Naive thymus-derived CD4-positive, alpha-beta T cell (primary cell): ENCODE measurements at regions of chr11 and their contacts with region 1.

Region 1: DNA sequence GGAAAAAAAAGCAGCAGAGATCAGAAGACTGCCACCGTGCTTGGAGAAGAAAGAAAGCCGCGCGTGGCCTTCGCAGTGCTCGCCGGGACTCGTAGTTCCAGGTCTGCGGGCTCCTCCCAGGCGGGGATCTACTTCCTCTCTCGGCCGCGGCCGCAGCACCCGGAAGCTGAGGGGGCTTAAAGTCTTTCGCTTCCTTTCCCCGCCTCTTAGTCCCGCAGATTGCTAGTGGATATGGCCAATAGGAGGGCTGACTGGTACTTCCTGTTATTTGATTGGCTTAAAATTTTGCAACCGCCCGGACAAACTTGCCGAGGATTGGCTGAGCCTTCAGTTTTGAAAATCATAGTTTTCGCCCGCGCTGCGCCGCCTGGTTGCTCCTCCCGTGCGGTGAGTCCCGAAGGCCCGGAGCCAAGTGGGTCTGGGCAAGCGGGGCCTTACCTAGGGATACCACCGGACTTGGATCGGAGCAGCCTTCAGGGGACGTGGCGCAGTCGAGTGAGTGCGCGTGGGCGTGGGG is at the start of gene INCENP:
- DNase-seq: peak; percentile 75 to 97 (median 95)
- ATAC-seq: peak; percentile 100
- H3K4me3 ChIP-seq: peak within 1 kb of the TSS; percentile 87
- H3K4me3 Mint-ChIP-seq: peak within 1 kb of the TSS; percentile 89 to 95 (median 94)
- H3K27ac ChIP-seq: peak within 1 kb of the TSS; percentile 81
- H3K27ac Mint-ChIP-seq: peak within 1 kb of the TSS; percentile 53 to 95 (median 91)
- H3K4me1 ChIP-seq: peaks cover 6 to 9% of the 10 kb centered on the region in 2 donors
- H3K4me1 Mint-ChIP-seq: peaks cover 22 to 40% (median 28%) of the 10 kb centered on the region in 7 donors
- H3K27me3 ChIP-seq: no peaks in the 10 kb centered on the region
- H3K27me3 Mint-ChIP-seq: peaks cover 0 to 15% (median 0%) of the 10 kb centered on the region in 5 donors
- total RNA-seq, gene INCENP: 18.6 to 124 (median 25.6) TPM

Region 2: GRCh38 chr11:60906132-60906972 is 1217.4 kb before region 1 on chr11 and contains the start of gene PRPF19:
- CTCF ChIA-PET with region 1: no interaction called
- POLR2A ChIA-PET with region 1: no interaction called
- intact Hi-C with region 1: loop called in 1 of 2 experiments (anchors 5 kb)
- DNase-seq: peak; percentile 98 to 100 (median 99)
- ATAC-seq: peak; percentile 96
- H3K4me3 ChIP-seq: peak within 1 kb of the TSS; percentile 89
- H3K4me3 Mint-ChIP-seq: peak within 1 kb of the TSS; percentile 84 to 95 (median 91)
- H3K27ac ChIP-seq: peak within 1 kb of the TSS; percentile 88
- H3K27ac Mint-ChIP-seq: peak within 1 kb of the TSS; percentile 95 to 100 (median 98)
- H3K4me1 ChIP-seq: peaks cover 22 to 26% of the 10 kb centered on the region in 2 donors
- H3K4me1 Mint-ChIP-seq: peaks cover 34 to 69% (median 58%) of the 10 kb centered on the region in 7 donors
- H3K27me3 ChIP-seq: no peaks in the 10 kb centered on the region
- H3K27me3 Mint-ChIP-seq: peaks cover 0 to 11% (median 0%) of the 10 kb centered on the region in 5 donors
- total RNA-seq, gene PRPF19: 72.8 to 139 (median 85.6) TPM

Region 3: DNA sequence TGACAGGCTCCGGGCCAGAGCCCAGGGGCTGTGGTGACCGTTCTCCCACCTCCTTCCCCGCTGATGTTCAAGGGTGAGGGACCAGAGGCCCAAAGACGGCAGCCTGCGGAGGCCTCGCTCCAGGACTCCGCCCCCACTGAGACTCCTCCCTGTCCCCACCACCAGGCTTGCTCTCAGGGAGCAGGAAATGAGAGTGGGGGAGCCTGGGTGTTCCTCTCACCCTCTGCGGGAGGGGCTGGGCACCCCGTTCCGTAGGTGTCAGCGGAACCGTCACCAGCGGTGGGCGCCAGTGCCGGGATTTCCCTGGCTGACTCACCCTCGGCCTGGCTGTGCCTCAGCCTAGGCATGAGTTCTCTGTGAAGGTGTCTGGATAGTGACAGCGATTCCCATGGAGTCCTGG is 427.8 kb before region 1 on chr11:
- CTCF ChIA-PET with region 1: no interaction called
- POLR2A ChIA-PET with region 1: no interaction called
- intact Hi-C with region 1: loop called in 1 of 2 experiments (anchors 1 kb)
- DNase-seq: peak; percentile 67 to 96 (median 87)
- ATAC-seq: peak; percentile 99
- H3K4me3 ChIP-seq: peak overlapping the region; percentile 55
- H3K4me3 Mint-ChIP-seq: peak overlapping the region; percentile 71 to 80 (median 76)
- H3K27ac ChIP-seq: peak overlapping the region; percentile 71
- H3K27ac Mint-ChIP-seq: peak overlapping the region; percentile 76 to 97 (median 86)
- H3K4me1 ChIP-seq: peaks cover 14 to 31% of the 10 kb centered on the region in 2 donors
- H3K4me1 Mint-ChIP-seq: peaks cover 18 to 29% (median 26%) of the 10 kb centered on the region in 7 donors
- H3K27me3 ChIP-seq: no peaks in the 10 kb centered on the region
- H3K27me3 Mint-ChIP-seq: no peaks in the 10 kb centered on the region

Region 4: DNA sequence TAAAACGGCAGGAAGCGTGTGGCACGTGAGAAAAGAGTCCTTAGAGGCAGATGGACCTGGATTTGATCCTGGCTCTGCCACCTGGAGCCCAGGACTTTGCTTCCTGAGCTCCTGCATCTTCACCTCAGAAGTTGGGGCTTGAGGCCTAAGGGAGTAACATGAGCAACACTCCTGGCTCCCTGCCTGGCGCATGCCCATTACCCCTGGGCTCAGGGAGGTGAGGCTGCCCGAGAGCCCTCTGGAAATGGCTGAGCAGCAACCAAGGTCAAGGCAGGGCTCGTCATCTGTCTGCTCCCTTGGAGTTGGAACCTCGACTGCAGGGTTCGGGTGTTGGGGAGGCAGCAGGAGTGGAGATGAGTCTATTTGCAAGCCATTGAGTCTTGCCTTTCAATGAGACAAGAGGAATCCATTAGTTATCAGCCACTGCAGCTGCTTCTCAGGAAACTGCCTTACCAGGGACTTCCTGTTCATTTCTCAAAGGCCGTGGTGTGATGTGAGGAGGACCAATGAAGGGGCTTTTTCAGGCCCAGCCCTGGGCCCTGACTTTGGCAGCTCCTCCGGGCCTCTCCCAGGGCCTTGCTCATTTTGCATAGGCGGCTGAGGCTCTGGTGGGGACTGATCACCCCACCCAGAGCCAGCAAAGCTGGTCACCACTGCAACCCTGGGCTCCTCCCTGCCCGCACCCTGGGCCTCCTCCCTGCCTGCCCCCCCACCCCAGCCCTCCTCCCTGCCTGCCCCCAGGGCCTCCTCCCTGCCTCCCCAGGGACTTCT is 289.3 kb before region 1 on chr11:
- CTCF ChIA-PET with region 1: no interaction called
- POLR2A ChIA-PET with region 1: no interaction called
- intact Hi-C with region 1: loop called in 1 of 2 experiments (anchors 5 kb)
- DNase-seq: peak in 8 of 9 donors; percentile 17 to 71 (median 37)
- ATAC-seq: peak; percentile 92
- H3K4me3 ChIP-seq: no peak overlapping the region
- H3K4me3 Mint-ChIP-seq: peak overlapping the region in 8 of 10 donors; percentile 4 to 84 (median 48)
- H3K27ac ChIP-seq: peak overlapping the region; percentile 39
- H3K27ac Mint-ChIP-seq: peak overlapping the region in 8 of 9 donors; percentile 32 to 98 (median 78)
- H3K4me1 ChIP-seq: peaks cover 11 to 14% of the 10 kb centered on the region in 2 donors
- H3K4me1 Mint-ChIP-seq: peaks cover 22 to 69% (median 38%) of the 10 kb centered on the region in 7 donors
- H3K27me3 ChIP-seq: no peaks in the 10 kb centered on the region
- H3K27me3 Mint-ChIP-seq: peaks cover 0 to 41% (median 24%) of the 10 kb centered on the region in 5 donors

Region 5: GRCh38 chr11:61891331-61892084 is 232.2 kb before region 1 on chr11 and contains the start of gene FADS3:
- CTCF ChIA-PET with region 1: no interaction called
- POLR2A ChIA-PET with region 1: no interaction called
- intact Hi-C with region 1: loop called in 1 of 2 experiments (anchors 1 kb)
- DNase-seq: peak; percentile 39 to 78 (median 45)
- ATAC-seq: peak; percentile 77
- H3K4me3 ChIP-seq: peak within 1 kb of the TSS; percentile 64
- H3K4me3 Mint-ChIP-seq: peak within 1 kb of the TSS; percentile 73 to 93 (median 82)
- H3K27ac ChIP-seq: peak within 1 kb of the TSS; percentile 69
- H3K27ac Mint-ChIP-seq: peak within 1 kb of the TSS in 7 of 9 donors; percentile 36 to 86 (median 73)
- H3K4me1 ChIP-seq: peaks cover 9% of the 10 kb centered on the region in 2 donors
- H3K4me1 Mint-ChIP-seq: peaks cover 0 to 11% (median 4%) of the 10 kb centered on the region in 7 donors
- H3K27me3 ChIP-seq: no peaks in the 10 kb centered on the region
- H3K27me3 Mint-ChIP-seq: peaks cover 0 to 10% (median 0%) of the 10 kb centered on the region in 5 donors
- total RNA-seq, gene FADS3: 1.4 to 8.6 (median 6.2) TPM

Region 6: DNA sequence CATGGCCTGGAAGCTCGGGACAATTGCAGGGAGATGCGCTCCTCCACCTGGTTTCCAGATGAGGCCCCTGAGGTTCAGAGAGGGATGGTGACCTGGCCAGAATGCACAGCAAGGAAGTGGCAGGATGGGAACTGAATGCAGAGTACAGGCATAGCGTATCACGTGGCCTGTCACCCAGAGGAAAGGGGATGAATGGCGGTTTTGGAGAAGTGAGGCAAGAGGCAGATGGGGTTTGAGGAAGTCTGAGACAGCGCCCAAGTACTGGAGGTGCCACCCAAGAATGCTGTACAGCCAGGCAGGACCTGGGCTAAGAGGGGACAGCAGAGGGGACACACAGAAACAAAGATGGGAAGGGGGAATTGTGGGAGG is 211.2 kb before region 1 on chr11:
- CTCF ChIA-PET with region 1: no interaction called
- POLR2A ChIA-PET with region 1: no interaction called
- intact Hi-C with region 1: no loop called
- DNase-seq: no peak
- ATAC-seq: peak; percentile 78
- H3K4me3 ChIP-seq: no peak overlapping the region
- H3K4me3 Mint-ChIP-seq: no peak overlapping the region
- H3K27ac ChIP-seq: no peak overlapping the region
- H3K27ac Mint-ChIP-seq: no peak overlapping the region
- H3K4me1 ChIP-seq: no peaks in the 10 kb centered on the region
- H3K4me1 Mint-ChIP-seq: peaks cover 0 to 7% (median 1%) of the 10 kb centered on the region in 7 donors
- H3K27me3 ChIP-seq: no peaks in the 10 kb centered on the region
- H3K27me3 Mint-ChIP-seq: peaks cover 33 to 46% (median 34%) of the 10 kb centered on the region in 5 donors